Naive thymus-derived CD4-positive, alpha-beta T cell (primary cell): ENCODE measurements at regions of chr3 and their contacts with region 1.

Region 1: GRCh38 chr3:143763564-143764162 is 84.6 kb downstream of the SLC9A9 start:
- DNase-seq: peak in 4 of 9 donors; percentile 19 to 50 (median 30)
- ATAC-seq: no peak
- H3K4me3 ChIP-seq: no peak overlapping the region
- H3K4me3 Mint-ChIP-seq: peak overlapping the region in 2 of 10 donors; percentile 36 to 39
- H3K27ac ChIP-seq: no peak overlapping the region
- H3K27ac Mint-ChIP-seq: peak overlapping the region in 3 of 9 donors; percentile 19 to 68 (median 66)
- H3K4me1 ChIP-seq: peaks cover 0 to 5% of the 10 kb centered on the region in 2 donors
- H3K4me1 Mint-ChIP-seq: peaks cover 0 to 40% (median 34%) of the 10 kb centered on the region in 7 donors
- H3K27me3 ChIP-seq: no peaks in the 10 kb centered on the region
- H3K27me3 Mint-ChIP-seq: peaks cover 0 to 4% (median 0%) of the 10 kb centered on the region in 5 donors

Region 2: DNA sequence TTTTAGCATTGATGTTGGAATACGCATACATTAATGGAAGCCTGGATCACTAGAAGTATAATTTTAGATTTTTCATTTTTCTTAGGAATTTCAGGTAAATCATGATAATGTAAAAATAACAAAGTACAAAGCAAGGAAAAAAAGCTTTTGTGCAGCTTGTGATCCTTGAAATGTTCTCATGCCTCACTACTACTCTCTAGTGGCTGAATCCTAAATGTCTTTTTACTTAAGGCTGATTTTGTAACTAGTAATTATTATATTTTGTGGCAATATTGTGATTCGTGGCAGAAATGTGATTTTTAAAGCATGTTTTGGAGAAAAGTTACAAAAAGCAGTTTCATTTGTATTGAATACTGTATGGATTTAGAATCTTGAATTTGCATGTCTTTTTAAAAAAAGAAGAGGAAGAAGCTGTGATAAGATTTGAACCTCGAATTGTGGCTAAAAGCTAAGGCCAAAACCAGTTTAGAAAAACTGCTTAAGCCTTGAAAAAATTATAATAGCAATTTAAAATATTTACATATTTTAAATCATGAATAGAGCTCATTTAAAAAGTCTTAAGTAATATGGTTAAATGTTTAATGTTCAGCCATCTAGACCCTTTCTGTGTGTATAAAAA is 723.3 kb before region 1 on chr3:
- CTCF ChIA-PET with region 1: no interaction called
- POLR2A ChIA-PET with region 1: no interaction called
- intact Hi-C with region 1: loop called in 1 of 2 experiments (anchors 5 kb)
- DNase-seq: peak in 1 of 9 donors; percentile 13
- ATAC-seq: no peak
- H3K4me3 ChIP-seq: no peak overlapping the region
- H3K4me3 Mint-ChIP-seq: no peak overlapping the region
- H3K27ac ChIP-seq: no peak overlapping the region
- H3K27ac Mint-ChIP-seq: no peak overlapping the region
- H3K4me1 ChIP-seq: no peaks in the 10 kb centered on the region
- H3K4me1 Mint-ChIP-seq: peaks cover 0 to 16% (median 5%) of the 10 kb centered on the region in 7 donors
- H3K27me3 ChIP-seq: no peaks in the 10 kb centered on the region
- H3K27me3 Mint-ChIP-seq: no peaks in the 10 kb centered on the region

Region 3: GRCh38 chr3:143060906-143061305 is 702.8 kb before region 1 on chr3:
- CTCF ChIA-PET with region 1: no interaction called
- POLR2A ChIA-PET with region 1: no interaction called
- intact Hi-C with region 1: loop called in 1 of 2 experiments (anchors 5 kb)
- DNase-seq: no peak
- ATAC-seq: no peak
- H3K4me3 ChIP-seq: no peak overlapping the region
- H3K4me3 Mint-ChIP-seq: peak overlapping the region in 1 of 10 donors; percentile 22
- H3K27ac ChIP-seq: no peak overlapping the region
- H3K27ac Mint-ChIP-seq: peak overlapping the region in 5 of 9 donors; percentile 16 to 84 (median 50)
- H3K4me1 ChIP-seq: no peaks in the 10 kb centered on the region
- H3K4me1 Mint-ChIP-seq: peaks cover 0 to 24% (median 10%) of the 10 kb centered on the region in 7 donors
- H3K27me3 ChIP-seq: no peaks in the 10 kb centered on the region
- H3K27me3 Mint-ChIP-seq: no peaks in the 10 kb centered on the region

Region 4: GRCh38 chr3:143751643-143752178 is 12.0 kb before region 1 on chr3:
- CTCF ChIA-PET with region 1: interaction called, 8 read pairs
- POLR2A ChIA-PET with region 1: interaction called, 4 read pairs
- intact Hi-C with region 1: loop called in 1 of 2 experiments (anchors 1 kb)
- DNase-seq: peak; percentile 12 to 83 (median 75)
- ATAC-seq: peak; percentile 80
- H3K4me3 ChIP-seq: peak overlapping the region; percentile 42
- H3K4me3 Mint-ChIP-seq: peak overlapping the region; percentile 67 to 89 (median 78)
- H3K27ac ChIP-seq: peak overlapping the region; percentile 63
- H3K27ac Mint-ChIP-seq: peak overlapping the region; percentile 88 to 100 (median 94)
- H3K4me1 ChIP-seq: peaks cover 16 to 35% of the 10 kb centered on the region in 2 donors
- H3K4me1 Mint-ChIP-seq: peaks cover 20 to 71% (median 68%) of the 10 kb centered on the region in 7 donors
- H3K27me3 ChIP-seq: no peaks in the 10 kb centered on the region
- H3K27me3 Mint-ChIP-seq: no peaks in the 10 kb centered on the region